WTC11 (cell line): ENCODE measurements at regions of chr19 and their contacts with region 1.

Region 1: GRCh38 chr19:37906869-37907734 is at the start of gene SIPA1L3:
- DNase-seq: peak; percentile 97
- ATAC-seq: peak; percentile 92
- H3K4me3 Mint-ChIP-seq: peak within 1 kb of the TSS; percentile 90
- H3K27ac Mint-ChIP-seq: peak within 1 kb of the TSS; percentile 98
- H3K4me1 Mint-ChIP-seq: peaks cover 38% of the 10 kb centered on the region
- H3K27me3 Mint-ChIP-seq: no peaks in the 10 kb centered on the region; the same call in 1 of the 2 replicates
- CTCF ChIP-seq: no peak
- total RNA-seq, gene SIPA1L3: 41.5 to 44.4 TPM (median 42.4 TPM) in 3 replicates

Region 2: GRCh38 chr19:37669336-37669963 is 237.7 kb before region 1 on chr19:
- CTCF ChIA-PET with region 1: no interaction called
- POLR2A ChIA-PET with region 1: no interaction called
- DNase-seq: no peak
- ATAC-seq: no peak
- H3K4me3 Mint-ChIP-seq: no peak overlapping the region
- H3K27ac Mint-ChIP-seq: no peak overlapping the region
- H3K4me1 Mint-ChIP-seq: no peaks in the 10 kb centered on the region
- H3K27me3 Mint-ChIP-seq: peaks cover 4% of the 10 kb centered on the region
- CTCF ChIP-seq: no peak

Region 3: GRCh38 chr19:37893845-37894575 is 13.1 kb before region 1 on chr19:
- CTCF ChIA-PET with region 1: interaction called, 11 read pairs
- POLR2A ChIA-PET with region 1: no interaction called
- DNase-seq: no peak
- ATAC-seq: no peak
- H3K4me3 Mint-ChIP-seq: no peak overlapping the region
- H3K27ac Mint-ChIP-seq: no peak overlapping the region
- H3K4me1 Mint-ChIP-seq: peaks cover 3% of the 10 kb centered on the region
- H3K27me3 Mint-ChIP-seq: peaks cover 7% of the 10 kb centered on the region
- CTCF ChIP-seq: no peak

Region 4: GRCh38 chr19:37992761-37993160 is 85.7 kb after region 1 on chr19:
- CTCF ChIA-PET with region 1: interaction called, 39 read pairs
- POLR2A ChIA-PET with region 1: interaction called, 12 read pairs
- DNase-seq: no peak
- ATAC-seq: no peak
- H3K4me3 Mint-ChIP-seq: no peak overlapping the region
- H3K27ac Mint-ChIP-seq: no peak overlapping the region
- H3K4me1 Mint-ChIP-seq: peaks cover 46% of the 10 kb centered on the region
- H3K27me3 Mint-ChIP-seq: no peaks in the 10 kb centered on the region
- CTCF ChIP-seq: no peak

Region 5: DNA sequence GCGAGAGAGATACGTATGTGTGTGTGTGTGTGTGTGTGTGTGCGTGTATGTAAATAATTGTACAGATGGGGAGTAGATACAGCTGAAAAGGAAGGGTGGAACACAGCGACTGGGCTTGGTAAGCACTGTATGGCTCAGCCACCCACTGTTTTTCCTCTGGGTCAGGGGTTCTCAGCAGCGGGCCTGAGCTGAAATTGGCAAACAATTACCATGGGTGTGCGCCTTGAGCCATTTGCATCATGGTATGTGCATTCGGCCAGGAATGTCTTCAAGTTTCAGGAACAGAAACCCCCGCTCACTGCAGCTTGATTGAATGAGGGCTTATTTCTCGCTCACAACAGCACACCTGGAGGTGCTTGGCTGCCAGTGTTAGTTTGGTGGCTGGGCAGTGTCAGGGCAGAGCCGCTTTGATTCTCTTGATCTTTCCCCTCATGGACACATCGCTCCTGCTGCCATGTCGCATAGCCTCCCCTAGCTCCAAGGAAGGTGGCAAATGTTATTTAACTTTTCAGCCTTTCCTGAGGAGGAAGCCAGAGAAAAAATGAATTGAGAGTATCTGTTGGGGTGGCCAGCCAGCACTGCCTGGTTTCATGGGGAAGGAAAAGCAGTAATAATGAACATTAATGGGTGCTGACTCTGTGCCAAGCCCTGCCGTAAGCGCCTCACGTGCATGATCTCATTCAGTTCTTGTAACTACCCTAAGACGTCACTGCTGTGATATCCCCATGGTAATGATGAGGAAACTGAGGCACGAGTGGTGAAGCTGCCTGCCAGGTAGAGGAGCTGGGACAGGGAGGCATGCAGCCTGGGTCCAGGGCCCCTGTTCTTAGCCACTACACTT is 126.8 kb after region 1 on chr19:
- CTCF ChIA-PET with region 1: interaction called, 10 read pairs
- POLR2A ChIA-PET with region 1: interaction called, 5 read pairs
- DNase-seq: peak; percentile 53
- ATAC-seq: peak; percentile 82
- H3K4me3 Mint-ChIP-seq: no peak overlapping the region
- H3K27ac Mint-ChIP-seq: peak overlapping the region; percentile 97
- H3K4me1 Mint-ChIP-seq: peaks cover 60% of the 10 kb centered on the region
- H3K27me3 Mint-ChIP-seq: no peaks in the 10 kb centered on the region; the same call in 1 of the 2 replicates
- CTCF ChIP-seq: no peak

Region 6: GRCh38 chr19:38079926-38080380 is 172.9 kb after region 1 on chr19:
- CTCF ChIA-PET with region 1: interaction called, 15 read pairs
- POLR2A ChIA-PET with region 1: no interaction called
- DNase-seq: no peak
- ATAC-seq: no peak
- H3K4me3 Mint-ChIP-seq: no peak overlapping the region
- H3K27ac Mint-ChIP-seq: peak overlapping the region; percentile 54
- H3K4me1 Mint-ChIP-seq: peaks cover 20% of the 10 kb centered on the region
- H3K27me3 Mint-ChIP-seq: no peaks in the 10 kb centered on the region
- CTCF ChIP-seq: no peak

Region 7: GRCh38 chr19:38183251-38183897 is 276.3 kb after region 1 on chr19:
- CTCF ChIA-PET with region 1: interaction called, 13 read pairs
- POLR2A ChIA-PET with region 1: no interaction called
- DNase-seq: peak; percentile 85
- ATAC-seq: peak; percentile 97
- H3K4me3 Mint-ChIP-seq: peak overlapping the region; percentile 83
- H3K27ac Mint-ChIP-seq: peak overlapping the region; percentile 12; the same call in 1 of the 2 replicates
- H3K4me1 Mint-ChIP-seq: peaks cover 25% of the 10 kb centered on the region
- H3K27me3 Mint-ChIP-seq: no peaks in the 10 kb centered on the region
- CTCF ChIP-seq: no peak

Region 8: DNA sequence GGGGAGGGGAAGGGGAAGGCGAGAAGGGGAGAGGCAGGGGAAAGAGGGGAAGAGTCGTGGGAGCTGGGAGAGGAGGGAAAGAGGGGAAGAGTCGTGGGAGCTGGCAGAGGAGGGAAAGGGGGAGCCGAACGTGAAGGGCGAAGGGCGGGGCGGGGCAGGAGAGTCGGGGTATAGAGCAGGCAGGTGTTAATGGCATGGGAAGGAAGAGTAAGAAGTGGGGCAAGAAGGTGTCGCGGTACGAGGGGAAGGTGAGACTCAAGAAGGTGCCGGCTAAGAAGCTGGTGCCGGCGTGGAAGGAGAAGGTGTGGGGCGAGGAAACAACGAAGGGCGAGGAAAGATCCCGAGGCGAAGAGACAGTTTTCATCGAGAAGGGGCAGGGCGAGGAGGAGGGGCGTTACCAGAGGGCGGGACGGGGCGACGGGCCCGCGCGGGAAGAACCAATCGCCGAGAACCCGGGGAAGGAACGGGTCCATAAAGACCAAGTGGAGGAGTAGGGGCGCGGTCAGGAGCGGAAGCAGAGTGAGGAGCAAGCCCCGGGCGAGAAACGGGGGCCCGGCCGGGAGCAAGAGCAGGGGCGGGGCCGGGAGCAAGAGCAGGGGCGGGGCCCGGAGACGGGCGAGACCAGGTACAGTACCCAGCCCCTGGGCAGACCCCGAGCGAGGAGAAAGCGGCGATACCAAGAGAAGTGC is 429.0 kb after region 1 on chr19:
- CTCF ChIA-PET with region 1: interaction called, 10 read pairs
- POLR2A ChIA-PET with region 1: no interaction called
- DNase-seq: peak; percentile 93
- ATAC-seq: peak; percentile 71
- H3K4me3 Mint-ChIP-seq: peak overlapping the region; percentile 100
- H3K27ac Mint-ChIP-seq: peak overlapping the region; percentile 100
- H3K4me1 Mint-ChIP-seq: peaks cover 11% of the 10 kb centered on the region
- H3K27me3 Mint-ChIP-seq: peaks cover 3% of the 10 kb centered on the region; the same call in 1 of the 2 replicates
- CTCF ChIP-seq: no peak